A673 (cell line): ENCODE measurements at regions of chr18 and their contacts with region 1.

Region 1: GRCh38 chr18:9334329-9334972 is at the start of gene TWSG1:
- DNase-seq: peak; percentile 98
- H3K4me3 ChIP-seq: peak within 1 kb of the TSS; percentile 87
- H3K27ac ChIP-seq: peak within 1 kb of the TSS; percentile 78
- H3K4me1 ChIP-seq: peaks cover 9% of the 10 kb centered on the region
- H3K27me3 ChIP-seq: no peaks in the 10 kb centered on the region
- CTCF ChIP-seq: peak; percentile 41; the same call in 1 of the 2 replicates
- total RNA-seq, gene TWSG1: 33.6 and 34.9 TPM in 2 replicates

Region 2: DNA sequence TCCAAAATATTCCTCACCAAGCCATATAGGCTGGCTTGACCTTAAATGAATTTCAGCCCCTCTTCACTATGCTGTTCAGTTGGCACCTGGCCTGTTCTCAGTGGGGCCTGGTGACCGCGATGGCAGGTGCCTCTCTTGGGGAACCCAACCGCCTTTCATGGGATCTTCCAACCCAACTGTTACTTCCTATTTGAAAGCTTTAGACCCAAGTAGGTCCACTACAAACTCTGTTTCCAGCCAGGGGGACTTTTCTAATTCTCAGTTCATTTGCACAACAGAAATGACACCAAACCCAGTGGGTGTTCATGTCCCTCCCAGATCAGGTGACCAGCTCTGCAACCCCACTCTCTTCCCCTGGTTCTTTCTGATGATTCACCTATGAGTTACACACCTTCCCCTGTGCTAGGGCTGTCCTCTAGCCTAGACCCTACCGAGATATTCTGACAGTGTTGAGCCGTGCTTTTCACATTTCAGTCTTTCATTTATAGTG is 267.6 kb before region 1 on chr18:
- CTCF ChIA-PET with region 1: no interaction called
- POLR2A ChIA-PET with region 1: no interaction called
- intact Hi-C with region 1: loop called (anchors 2 kb)
- DNase-seq: no peak
- H3K4me3 ChIP-seq: no peak overlapping the region
- H3K27ac ChIP-seq: no peak overlapping the region
- H3K4me1 ChIP-seq: no peaks in the 10 kb centered on the region
- H3K27me3 ChIP-seq: no peaks in the 10 kb centered on the region
- CTCF ChIP-seq: no peak

Region 3: GRCh38 chr18:9136315-9137155 is 197.9 kb before region 1 on chr18 and contains the start of gene ANKRD12:
- CTCF ChIA-PET with region 1: no interaction called
- POLR2A ChIA-PET with region 1: no interaction called
- intact Hi-C with region 1: loop called (anchors 1 kb)
- DNase-seq: peak; percentile 98
- H3K4me3 ChIP-seq: peak within 1 kb of the TSS; percentile 68
- H3K27ac ChIP-seq: peak within 1 kb of the TSS; percentile 69
- H3K4me1 ChIP-seq: peaks cover 23% of the 10 kb centered on the region
- H3K27me3 ChIP-seq: no peaks in the 10 kb centered on the region
- CTCF ChIP-seq: no peak
- total RNA-seq, gene ANKRD12: 23.7 and 24.2 TPM in 2 replicates

Region 4: GRCh38 chr18:9147440-9148202 is 186.8 kb before region 1 on chr18:
- CTCF ChIA-PET with region 1: no interaction called
- POLR2A ChIA-PET with region 1: no interaction called
- intact Hi-C with region 1: loop called (anchors 1 kb)
- DNase-seq: peak; percentile 76
- H3K4me3 ChIP-seq: no peak overlapping the region
- H3K27ac ChIP-seq: no peak overlapping the region
- H3K4me1 ChIP-seq: peaks cover 4% of the 10 kb centered on the region
- H3K27me3 ChIP-seq: no peaks in the 10 kb centered on the region
- CTCF ChIP-seq: peak; percentile 80

Region 5: DNA sequence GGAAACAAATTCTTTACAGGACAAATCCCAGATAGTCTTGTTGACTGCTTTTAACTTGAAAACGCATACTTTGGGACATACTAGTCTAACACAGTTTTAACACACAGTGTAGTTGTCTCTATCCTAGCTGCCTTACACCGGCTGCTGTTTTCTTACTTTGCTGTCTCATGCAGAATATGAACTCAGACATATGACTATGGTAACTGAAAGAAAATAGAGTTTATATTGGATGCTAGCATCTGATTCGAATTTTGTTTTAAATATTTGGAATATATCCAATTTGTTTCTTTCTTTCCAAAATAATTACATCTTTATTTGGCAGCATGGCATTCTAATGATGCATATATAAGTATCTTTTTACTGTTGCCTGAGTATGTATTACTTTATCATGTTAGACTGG is 128.0 kb before region 1 on chr18:
- CTCF ChIA-PET with region 1: no interaction called
- POLR2A ChIA-PET with region 1: no interaction called
- intact Hi-C with region 1: no loop called
- DNase-seq: no peak
- H3K4me3 ChIP-seq: no peak overlapping the region
- H3K27ac ChIP-seq: no peak overlapping the region
- H3K4me1 ChIP-seq: peaks cover 5% of the 10 kb centered on the region
- H3K27me3 ChIP-seq: no peaks in the 10 kb centered on the region
- CTCF ChIP-seq: no peak

Region 6: GRCh38 chr18:9454061-9454703 is 119.7 kb after region 1 on chr18:
- CTCF ChIA-PET with region 1: no interaction called
- POLR2A ChIA-PET with region 1: no interaction called
- intact Hi-C with region 1: no loop called
- DNase-seq: no peak
- H3K4me3 ChIP-seq: no peak overlapping the region
- H3K27ac ChIP-seq: no peak overlapping the region
- H3K4me1 ChIP-seq: no peaks in the 10 kb centered on the region
- H3K27me3 ChIP-seq: no peaks in the 10 kb centered on the region
- CTCF ChIP-seq: no peak

Region 7: GRCh38 chr18:9683407-9684396 is 349.3 kb after region 1 on chr18:
- CTCF ChIA-PET with region 1: interaction called, 14 read pairs
- POLR2A ChIA-PET with region 1: no interaction called
- intact Hi-C with region 1: no loop called
- DNase-seq: peak; percentile 70
- H3K4me3 ChIP-seq: no peak overlapping the region
- H3K27ac ChIP-seq: no peak overlapping the region
- H3K4me1 ChIP-seq: peaks cover 4% of the 10 kb centered on the region
- H3K27me3 ChIP-seq: no peaks in the 10 kb centered on the region
- CTCF ChIP-seq: peak; percentile 53

Region 8: DNA sequence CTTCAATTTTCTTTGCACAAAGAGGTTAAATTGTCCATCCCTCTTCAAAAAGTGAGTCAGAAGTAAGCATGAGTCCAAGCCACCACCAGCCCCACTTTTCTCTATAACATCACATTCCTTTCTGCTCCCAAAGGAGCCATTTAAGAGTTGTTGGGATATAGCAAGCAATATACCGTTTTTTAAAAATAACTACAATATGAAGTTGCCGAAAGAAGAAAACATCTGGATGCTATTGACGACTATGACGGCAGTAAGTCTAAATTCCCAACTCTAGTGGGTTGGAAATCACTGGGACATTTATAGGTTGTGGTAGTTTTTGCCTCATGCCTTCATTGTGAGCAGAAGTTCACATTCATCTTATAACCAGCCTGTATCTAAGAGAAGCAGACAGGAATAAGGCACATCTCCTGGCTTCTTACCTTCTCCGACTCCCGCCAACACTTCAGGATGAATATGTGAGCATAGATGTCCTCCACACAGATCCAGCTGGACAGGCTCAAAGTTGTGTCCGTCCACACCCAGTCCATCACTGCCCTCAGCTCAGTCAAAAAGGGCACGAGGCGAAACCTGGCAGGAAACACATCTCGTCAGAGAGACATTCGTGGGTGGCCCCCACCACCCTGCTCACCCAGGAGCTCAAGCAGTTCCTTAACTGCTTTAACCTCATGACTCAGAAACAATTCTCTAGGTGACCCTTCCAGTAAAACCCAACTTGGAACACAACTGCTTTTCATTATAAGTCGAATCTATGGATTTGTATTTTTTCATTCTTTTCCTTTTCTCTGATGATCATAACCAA is 1355.0 kb after region 1 on chr18:
- CTCF ChIA-PET with region 1: no interaction called
- POLR2A ChIA-PET with region 1: interaction called, 20 read pairs
- intact Hi-C with region 1: no loop called
- DNase-seq: no peak
- H3K4me3 ChIP-seq: no peak overlapping the region
- H3K27ac ChIP-seq: no peak overlapping the region
- H3K4me1 ChIP-seq: no peaks in the 10 kb centered on the region
- H3K27me3 ChIP-seq: peaks cover 6% of the 10 kb centered on the region
- CTCF ChIP-seq: no peak